ENCODE measurements at regions of chr4 and their contacts with region 1.

Region 1: GRCh38 chr4:114659386-114660008 is 60.9 kb downstream of the UGT8 start:
- DNase-seq: peak; percentile 78
- ATAC-seq: peak; percentile 88
- H3K4me3 ChIP-seq: no peak overlapping the region
- H3K4me3 Mint-ChIP-seq: no peak overlapping the region
- H3K27ac ChIP-seq: no peak overlapping the region
- H3K27ac Mint-ChIP-seq: no peak overlapping the region
- H3K4me1 ChIP-seq: no peaks in the 10 kb centered on the region
- H3K4me1 Mint-ChIP-seq: peaks cover 17% of the 10 kb centered on the region
- H3K27me3 ChIP-seq: no peaks in the 10 kb centered on the region
- H3K27me3 Mint-ChIP-seq: no peaks in the 10 kb centered on the region
- CTCF ChIP-seq: peak; percentile 91

Region 2: DNA sequence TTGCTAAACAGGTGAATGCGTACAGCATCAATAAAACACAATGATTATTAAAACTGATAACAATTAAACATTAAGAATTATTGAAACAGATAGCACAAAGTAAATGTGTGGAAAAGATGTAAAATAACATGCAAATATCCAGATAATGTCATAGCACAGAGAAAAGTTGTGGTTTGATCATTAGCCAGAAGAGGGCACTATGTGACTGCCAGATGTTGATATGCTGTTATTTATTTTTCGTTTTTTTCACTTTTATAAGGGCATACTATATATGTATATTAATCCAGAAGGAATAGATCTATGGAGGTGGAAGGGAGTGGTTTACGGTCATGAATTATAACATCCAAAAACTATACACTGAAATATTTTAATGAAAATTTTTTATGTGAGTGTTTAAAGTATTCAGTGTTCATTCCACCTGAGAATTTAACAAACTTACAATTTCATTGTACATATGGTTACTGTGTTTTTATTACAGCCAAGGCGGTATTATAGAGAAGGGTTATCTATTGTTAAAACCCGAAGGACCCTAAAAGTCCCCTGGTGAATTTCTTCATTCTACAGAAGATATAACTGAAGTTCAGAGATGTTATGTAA is 272.8 kb before region 1 on chr4:
- CTCF ChIA-PET with region 1: interaction called, 51 read pairs
- POLR2A ChIA-PET with region 1: no interaction called
- intact Hi-C with region 1: loop called (anchors 1 kb)
- DNase-seq: peak; percentile 59
- ATAC-seq: no peak
- H3K4me3 ChIP-seq: no peak overlapping the region
- H3K4me3 Mint-ChIP-seq: no peak overlapping the region
- H3K27ac ChIP-seq: no peak overlapping the region
- H3K27ac Mint-ChIP-seq: no peak overlapping the region
- H3K4me1 ChIP-seq: no peaks in the 10 kb centered on the region
- H3K4me1 Mint-ChIP-seq: no peaks in the 10 kb centered on the region
- H3K27me3 ChIP-seq: peaks cover 0 to 3% (median 0%) of the 10 kb centered on the region in 4 experiments
- H3K27me3 Mint-ChIP-seq: peaks cover 20% of the 10 kb centered on the region
- CTCF ChIP-seq: peak; percentile 96

Region 3: GRCh38 chr4:114417214-114417613 is 242.3 kb before region 1 on chr4:
- CTCF ChIA-PET with region 1: interaction called, 15 read pairs
- POLR2A ChIA-PET with region 1: no interaction called
- intact Hi-C with region 1: loop called (anchors 1 kb)
- DNase-seq: peak; percentile 7
- ATAC-seq: no peak
- H3K4me3 ChIP-seq: no peak overlapping the region
- H3K4me3 Mint-ChIP-seq: no peak overlapping the region
- H3K27ac ChIP-seq: no peak overlapping the region
- H3K27ac Mint-ChIP-seq: no peak overlapping the region
- H3K4me1 ChIP-seq: no peaks in the 10 kb centered on the region
- H3K4me1 Mint-ChIP-seq: no peaks in the 10 kb centered on the region
- H3K27me3 ChIP-seq: no peaks in the 10 kb centered on the region
- H3K27me3 Mint-ChIP-seq: peaks cover 5% of the 10 kb centered on the region
- CTCF ChIP-seq: no peak

Region 4: DNA sequence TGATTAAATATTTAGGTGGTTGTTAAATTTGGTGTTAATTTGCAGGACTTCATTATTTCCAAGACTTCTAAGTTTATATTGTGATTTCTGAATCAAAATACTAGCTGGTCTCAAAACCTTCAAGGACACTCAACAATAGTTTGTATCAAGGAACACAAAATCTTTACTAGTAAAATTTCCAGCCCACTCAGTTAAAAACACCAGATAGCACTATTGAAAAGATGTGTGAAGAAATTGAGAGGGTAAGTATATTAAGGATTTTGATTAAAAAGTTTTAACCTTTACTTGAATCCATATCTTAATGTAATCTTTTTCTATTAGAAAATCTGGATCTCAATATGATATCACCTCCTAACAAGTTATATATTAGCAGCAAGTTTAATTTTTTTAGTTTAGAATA is 150.2 kb before region 1 on chr4:
- CTCF ChIA-PET with region 1: interaction called, 18 read pairs
- POLR2A ChIA-PET with region 1: no interaction called
- intact Hi-C with region 1: loop called (anchors 1 kb)
- DNase-seq: peak; percentile 4
- ATAC-seq: no peak
- H3K4me3 ChIP-seq: no peak overlapping the region
- H3K4me3 Mint-ChIP-seq: no peak overlapping the region
- H3K27ac ChIP-seq: no peak overlapping the region
- H3K27ac Mint-ChIP-seq: no peak overlapping the region
- H3K4me1 ChIP-seq: no peaks in the 10 kb centered on the region
- H3K4me1 Mint-ChIP-seq: no peaks in the 10 kb centered on the region
- H3K27me3 ChIP-seq: peaks cover 0 to 9% (median 3%) of the 10 kb centered on the region in 4 experiments
- H3K27me3 Mint-ChIP-seq: peaks cover 30% of the 10 kb centered on the region
- CTCF ChIP-seq: peak; percentile 15

Region 5: GRCh38 chr4:114603497-114603896 is 56.0 kb before region 1 on chr4:
- CTCF ChIA-PET with region 1: interaction called, 9 read pairs
- POLR2A ChIA-PET with region 1: no interaction called
- intact Hi-C with region 1: loop called (anchors 2 kb)
- DNase-seq: peak; percentile 86
- ATAC-seq: peak; percentile 71
- H3K4me3 ChIP-seq: peak overlapping the region in 2 of 5 experiments; percentile 20 to 43
- H3K4me3 Mint-ChIP-seq: no peak overlapping the region
- H3K27ac ChIP-seq: peak overlapping the region; percentile 67 to 93
- H3K27ac Mint-ChIP-seq: no peak overlapping the region
- H3K4me1 ChIP-seq: peaks cover 47 to 65% of the 10 kb centered on the region in 2 donors
- H3K4me1 Mint-ChIP-seq: peaks cover 23% of the 10 kb centered on the region
- H3K27me3 ChIP-seq: no peaks in the 10 kb centered on the region
- H3K27me3 Mint-ChIP-seq: no peaks in the 10 kb centered on the region
- CTCF ChIP-seq: no peak

Region 6: DNA sequence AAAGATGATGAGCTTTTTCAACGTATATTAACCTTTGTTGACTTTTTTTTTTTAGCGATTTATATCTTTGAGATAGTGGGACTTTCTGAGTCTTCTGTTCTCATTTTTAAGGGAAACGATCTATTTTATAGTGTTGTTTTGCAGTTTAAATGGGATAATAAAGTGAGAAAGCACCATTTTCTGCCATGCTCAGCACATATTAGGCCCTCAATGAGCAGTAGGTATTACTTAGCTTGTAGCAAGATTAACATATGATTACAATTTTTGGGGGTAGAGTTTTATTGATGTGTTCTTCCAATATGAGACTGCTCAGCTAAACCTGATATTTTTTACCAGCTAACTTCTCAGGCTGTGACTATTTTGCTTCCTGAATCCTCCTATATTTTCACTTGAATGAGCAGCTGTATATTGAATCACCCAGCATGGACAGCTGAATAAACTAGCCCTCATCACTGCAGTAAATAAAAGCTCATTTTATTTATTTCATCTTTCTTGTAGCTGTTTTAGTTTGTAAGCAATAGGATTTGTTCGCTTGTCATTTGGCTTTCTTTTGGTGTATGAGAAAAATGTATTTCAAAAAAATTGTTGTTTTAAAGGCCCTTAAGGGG is 17.2 kb before region 1 on chr4:
- CTCF ChIA-PET with region 1: interaction called, 11 read pairs
- POLR2A ChIA-PET with region 1: no interaction called
- intact Hi-C with region 1: no loop called
- DNase-seq: no peak
- ATAC-seq: no peak
- H3K4me3 ChIP-seq: no peak overlapping the region
- H3K4me3 Mint-ChIP-seq: no peak overlapping the region
- H3K27ac ChIP-seq: peak overlapping the region in 1 of 2 donors; percentile 24
- H3K27ac Mint-ChIP-seq: no peak overlapping the region
- H3K4me1 ChIP-seq: peaks cover 0 to 5% of the 10 kb centered on the region in 2 donors
- H3K4me1 Mint-ChIP-seq: peaks cover 28% of the 10 kb centered on the region
- H3K27me3 ChIP-seq: no peaks in the 10 kb centered on the region
- H3K27me3 Mint-ChIP-seq: no peaks in the 10 kb centered on the region
- CTCF ChIP-seq: no peak

Region 7: GRCh38 chr4:114694770-114695169 is 35.3 kb after region 1 on chr4:
- CTCF ChIA-PET with region 1: interaction called, 10 read pairs
- POLR2A ChIA-PET with region 1: no interaction called
- intact Hi-C with region 1: loop called (anchors 1 kb)
- DNase-seq: peak; percentile 54
- ATAC-seq: no peak
- H3K4me3 ChIP-seq: no peak overlapping the region
- H3K4me3 Mint-ChIP-seq: no peak overlapping the region
- H3K27ac ChIP-seq: no peak overlapping the region
- H3K27ac Mint-ChIP-seq: no peak overlapping the region
- H3K4me1 ChIP-seq: peaks cover 0 to 6% of the 10 kb centered on the region in 2 donors
- H3K4me1 Mint-ChIP-seq: peaks cover 15% of the 10 kb centered on the region
- H3K27me3 ChIP-seq: no peaks in the 10 kb centered on the region
- H3K27me3 Mint-ChIP-seq: no peaks in the 10 kb centered on the region
- CTCF ChIP-seq: peak; percentile 86

Region 8: DNA sequence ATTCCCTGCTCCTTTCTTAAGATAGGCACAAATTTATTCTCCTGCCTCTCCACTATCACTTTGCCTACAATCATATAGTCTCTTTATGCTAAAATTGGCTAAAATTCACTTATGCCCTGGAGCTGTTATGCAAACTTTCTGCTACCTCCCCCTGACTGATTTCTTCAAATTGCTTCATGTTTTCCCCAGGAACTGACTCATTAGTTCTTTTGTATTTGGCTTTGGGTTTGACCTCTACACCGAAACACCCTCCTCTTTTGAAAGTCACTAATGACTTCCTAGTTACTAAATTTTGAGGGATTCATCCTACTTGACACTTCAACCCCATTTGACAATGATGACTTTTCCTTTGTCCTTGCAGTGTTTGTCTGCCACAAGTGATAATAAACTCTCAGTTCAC is 231.3 kb after region 1 on chr4:
- CTCF ChIA-PET with region 1: no interaction called
- POLR2A ChIA-PET with region 1: no interaction called
- intact Hi-C with region 1: no loop called
- DNase-seq: no peak
- ATAC-seq: no peak
- H3K4me3 ChIP-seq: no peak overlapping the region
- H3K4me3 Mint-ChIP-seq: no peak overlapping the region
- H3K27ac ChIP-seq: no peak overlapping the region
- H3K27ac Mint-ChIP-seq: no peak overlapping the region
- H3K4me1 ChIP-seq: no peaks in the 10 kb centered on the region
- H3K4me1 Mint-ChIP-seq: no peaks in the 10 kb centered on the region
- H3K27me3 ChIP-seq: no peaks in the 10 kb centered on the region
- H3K27me3 Mint-ChIP-seq: no peaks in the 10 kb centered on the region
- CTCF ChIP-seq: no peak

Measured in B cell (primary cell).